ENCODE measurements at regions of chr5 and their contacts with region 1.

Region 1: GRCh38 chr5:137320056-137321045 is 178.8 kb downstream of the SPOCK1 start:
- DNase-seq: peak; percentile 58

Region 2: GRCh38 chr5:137310051-137310730 is 10.2 kb before region 1 on chr5:
- CTCF ChIA-PET with region 1: interaction called, 14 read pairs
- POLR2A ChIA-PET with region 1: no interaction called
- DNase-seq: no peak

Region 3: GRCh38 chr5:137498301-137498735 is 178.0 kb after region 1 on chr5:
- CTCF ChIA-PET with region 1: interaction called, 13 read pairs
- POLR2A ChIA-PET with region 1: interaction called, 3 read pairs
- DNase-seq: no peak

Measured in HEK293T (cell line).